BJ (cell line): ENCODE measurements at regions of chr4 and their contacts with region 1.

Region 1: GRCh38 chr4:140252742-140253555 is 99.0 kb upstream of the MAML3 start:
- DNase-seq: no peak
- H3K4me3 ChIP-seq: peak overlapping the region; percentile 52
- H3K27me3 ChIP-seq: no peaks in the 10 kb centered on the region
- CTCF ChIP-seq: peak; percentile 77

Region 2: GRCh38 chr4:139734875-139735380 is 518.0 kb before region 1 on chr4:
- CTCF ChIA-PET with region 1: interaction called, 13 read pairs
- POLR2A ChIA-PET with region 1: no interaction called
- DNase-seq: peak; percentile 16
- H3K4me3 ChIP-seq: peak overlapping the region; percentile 41
- H3K27me3 ChIP-seq: peaks cover 3% of the 10 kb centered on the region; the same call in 1 of the 2 replicates
- CTCF ChIP-seq: peak; percentile 66

Region 3: GRCh38 chr4:140012688-140013486 is 240.1 kb before region 1 on chr4:
- CTCF ChIA-PET with region 1: interaction called, 20 read pairs
- POLR2A ChIA-PET with region 1: no interaction called
- DNase-seq: peak; percentile 9
- H3K4me3 ChIP-seq: no peak overlapping the region
- H3K27me3 ChIP-seq: no peaks in the 10 kb centered on the region
- CTCF ChIP-seq: peak; percentile 63

Region 4: GRCh38 chr4:140052050-140052449 is 200.9 kb before region 1 on chr4:
- CTCF ChIA-PET with region 1: interaction called, 31 read pairs
- POLR2A ChIA-PET with region 1: no interaction called
- DNase-seq: no peak
- H3K4me3 ChIP-seq: no peak overlapping the region
- H3K27me3 ChIP-seq: no peaks in the 10 kb centered on the region
- CTCF ChIP-seq: peak; percentile 73

Region 5: GRCh38 chr4:140153718-140154571 is 99.0 kb before region 1 on chr4 and contains the start of gene MAML3:
- CTCF ChIA-PET with region 1: interaction called, 10 read pairs
- POLR2A ChIA-PET with region 1: no interaction called
- DNase-seq: no peak
- H3K4me3 ChIP-seq: peak within 1 kb of the TSS; percentile 66
- H3K27me3 ChIP-seq: no peaks in the 10 kb centered on the region
- CTCF ChIP-seq: no peak
- polyA plus RNA-seq, gene MAML3: 1.6 and 1.9 TPM in 2 replicates

Region 6: GRCh38 chr4:140237606-140237986 is 15.4 kb before region 1 on chr4:
- CTCF ChIA-PET with region 1: interaction called, 22 read pairs
- POLR2A ChIA-PET with region 1: interaction called, 3 read pairs
- DNase-seq: peak; percentile 77
- H3K4me3 ChIP-seq: no peak overlapping the region
- H3K27me3 ChIP-seq: no peaks in the 10 kb centered on the region
- CTCF ChIP-seq: no peak